CD14-positive monocyte (primary cell): ENCODE measurements at regions of chr20 and their contacts with region 1.

Region 1: GRCh38 chr20:53652090-53652858 is 58.6 kb upstream of the ZNF217 start:
- DNase-seq: peak in 2 of 3 donors; percentile 41 to 49
- H3K4me3 ChIP-seq: peak overlapping the region in 1 of 3 experiments; percentile 40
- H3K4me3 Mint-ChIP-seq: peak overlapping the region in 1 of 2 donors; percentile 40
- H3K27ac ChIP-seq: peak overlapping the region in 1 of 2 donors; percentile 93
- H3K27ac Mint-ChIP-seq: peak overlapping the region; percentile 68 to 93 (median 90)
- H3K4me1 ChIP-seq: peaks cover 52 to 67% of the 10 kb centered on the region in 2 donors
- H3K4me1 Mint-ChIP-seq: peaks cover 58% of the 10 kb centered on the region
- H3K27me3 ChIP-seq: no peaks in the 10 kb centered on the region
- H3K27me3 Mint-ChIP-seq: no peaks in the 10 kb centered on the region
- CTCF ChIP-seq: no peak

Region 2: DNA sequence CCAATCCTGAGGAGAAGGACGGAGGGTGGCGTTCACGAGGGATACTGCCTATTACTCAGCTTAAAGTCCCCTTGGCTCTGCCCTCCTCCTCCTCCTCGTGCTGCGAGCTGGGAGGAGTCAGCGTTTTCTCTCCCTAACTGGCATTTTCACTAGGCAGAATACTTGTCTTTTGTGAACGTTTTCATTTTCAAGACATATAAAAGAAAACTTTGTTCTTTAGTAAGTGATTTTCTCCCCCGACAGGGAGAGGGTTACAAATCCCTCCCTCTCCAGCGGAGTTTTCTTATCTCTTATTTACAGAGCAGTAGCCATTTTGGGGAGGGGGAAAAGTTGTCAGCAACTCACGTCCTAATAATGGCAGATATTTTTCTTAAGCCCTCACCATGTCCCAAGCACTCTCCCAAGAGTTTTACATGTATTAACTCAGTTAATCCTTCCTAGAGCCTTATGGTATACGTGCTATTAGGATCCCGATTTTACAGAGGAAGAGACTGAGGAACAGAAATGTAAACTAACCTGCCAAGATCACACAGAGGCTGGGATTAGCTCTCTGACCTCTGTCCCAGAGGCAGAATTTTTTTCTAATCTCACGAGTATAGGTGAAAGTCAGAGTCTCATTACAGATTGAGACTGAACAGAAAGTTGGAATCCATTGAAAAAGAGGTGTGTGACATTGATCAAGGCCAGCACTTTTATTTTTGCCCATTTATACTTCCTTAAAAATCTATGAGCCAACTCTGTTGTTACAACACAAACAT is 28.6 kb before region 1 on chr20:
- intact Hi-C with region 1: loop called in 1 of 2 experiments (anchors 5 kb)
- DNase-seq: peak; percentile 62 to 82 (median 78)
- H3K4me3 ChIP-seq: peak overlapping the region; percentile 36 to 76 (median 76)
- H3K4me3 Mint-ChIP-seq: peak overlapping the region; percentile 75 to 86
- H3K27ac ChIP-seq: peak overlapping the region; percentile 71 to 96
- H3K27ac Mint-ChIP-seq: peak overlapping the region; percentile 88 to 96 (median 93)
- H3K4me1 ChIP-seq: peaks cover 56 to 63% of the 10 kb centered on the region in 2 donors
- H3K4me1 Mint-ChIP-seq: peaks cover 45% of the 10 kb centered on the region
- H3K27me3 ChIP-seq: no peaks in the 10 kb centered on the region
- H3K27me3 Mint-ChIP-seq: no peaks in the 10 kb centered on the region
- CTCF ChIP-seq: no peak